ENCODE measurements at regions of chr18 and their contacts with region 1.

Region 1: DNA sequence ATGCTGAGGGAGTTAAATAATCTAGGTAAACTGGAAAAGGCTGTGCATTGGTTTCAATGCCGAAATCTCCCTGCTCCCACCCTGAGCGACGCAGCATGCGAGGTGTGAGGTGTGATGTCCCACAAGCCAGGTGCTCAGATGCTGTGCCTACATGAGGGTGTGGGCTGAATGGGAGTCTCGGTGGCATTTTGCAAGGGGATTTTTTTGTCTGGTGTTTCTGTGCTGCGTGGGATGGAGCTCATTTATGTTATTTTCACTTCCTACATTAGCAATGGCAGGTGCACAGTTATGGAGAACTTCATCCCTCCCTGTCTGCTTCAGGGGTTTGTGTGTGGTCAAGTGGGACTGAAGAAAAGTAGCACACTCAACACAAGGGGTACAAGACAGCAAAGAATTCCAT is 110.2 kb upstream of the CCDC68 start:
- DNase-seq: peak; percentile 66
- ATAC-seq: peak; percentile 86
- H3K4me3 ChIP-seq: no peak overlapping the region
- H3K27ac ChIP-seq: peak overlapping the region; percentile 39; the same call in 1 of the 2 replicates
- H3K4me1 ChIP-seq: peaks cover 37% of the 10 kb centered on the region
- H3K27me3 ChIP-seq: no peaks in the 10 kb centered on the region
- CTCF ChIP-seq: no peak
- EP300 ChIP-seq: peak; percentile 93 to 95; a peak in 3 of 4 replicates
- POLR2A ChIP-seq: no peak
- RAD21 ChIP-seq: no peak

Region 2: GRCh38 chr18:55079481-55080355 is 10.2 kb after region 1 on chr18:
- CTCF ChIA-PET with region 1: interaction called, 5 read pairs
- POLR2A ChIA-PET with region 1: interaction called, 5 read pairs
- RAD21 ChIA-PET with region 1: interaction called, 3 read pairs
- SMC1A ChIA-PET with region 1: interaction called, 49 read pairs
- in situ Hi-C with region 1: no loop called
- intact Hi-C with region 1: no loop called
- DNase-seq: no peak
- ATAC-seq: no peak
- H3K4me3 ChIP-seq: no peak overlapping the region
- H3K27ac ChIP-seq: no peak overlapping the region
- H3K4me1 ChIP-seq: no peaks in the 10 kb centered on the region
- H3K27me3 ChIP-seq: no peaks in the 10 kb centered on the region
- CTCF ChIP-seq: no peak
- EP300 ChIP-seq: no peak
- POLR2A ChIP-seq: no peak
- RAD21 ChIP-seq: no peak

Region 3: DNA sequence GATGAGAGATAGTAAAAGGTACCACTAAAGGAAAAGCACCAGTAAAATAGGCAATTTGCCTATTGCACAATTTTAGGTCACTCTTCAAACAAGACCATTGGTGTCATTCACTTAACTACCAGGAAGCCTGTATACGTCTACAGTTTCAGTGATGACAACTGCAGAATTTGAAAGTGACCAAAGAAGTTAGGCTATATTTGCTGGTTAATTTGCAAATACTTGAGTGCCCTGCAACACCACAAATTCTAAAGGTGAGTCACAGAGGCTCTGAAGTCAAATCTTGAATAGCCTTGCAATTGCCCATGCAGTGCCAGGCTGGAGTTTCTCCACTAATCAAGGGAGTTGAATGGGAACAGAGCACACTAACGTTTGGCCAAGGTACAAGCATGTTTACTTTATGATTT is 18.5 kb after region 1 on chr18:
- CTCF ChIA-PET with region 1: interaction called, 3 read pairs
- POLR2A ChIA-PET with region 1: interaction called, 6 read pairs
- RAD21 ChIA-PET with region 1: interaction called, 5 read pairs
- SMC1A ChIA-PET with region 1: interaction called, 49 read pairs
- in situ Hi-C with region 1: no loop called
- intact Hi-C with region 1: no loop called
- DNase-seq: no peak
- ATAC-seq: peak; percentile 83
- H3K4me3 ChIP-seq: no peak overlapping the region
- H3K27ac ChIP-seq: no peak overlapping the region
- H3K4me1 ChIP-seq: no peaks in the 10 kb centered on the region
- H3K27me3 ChIP-seq: no peaks in the 10 kb centered on the region
- CTCF ChIP-seq: no peak
- EP300 ChIP-seq: no peak
- POLR2A ChIP-seq: no peak
- RAD21 ChIP-seq: no peak

Region 4: DNA sequence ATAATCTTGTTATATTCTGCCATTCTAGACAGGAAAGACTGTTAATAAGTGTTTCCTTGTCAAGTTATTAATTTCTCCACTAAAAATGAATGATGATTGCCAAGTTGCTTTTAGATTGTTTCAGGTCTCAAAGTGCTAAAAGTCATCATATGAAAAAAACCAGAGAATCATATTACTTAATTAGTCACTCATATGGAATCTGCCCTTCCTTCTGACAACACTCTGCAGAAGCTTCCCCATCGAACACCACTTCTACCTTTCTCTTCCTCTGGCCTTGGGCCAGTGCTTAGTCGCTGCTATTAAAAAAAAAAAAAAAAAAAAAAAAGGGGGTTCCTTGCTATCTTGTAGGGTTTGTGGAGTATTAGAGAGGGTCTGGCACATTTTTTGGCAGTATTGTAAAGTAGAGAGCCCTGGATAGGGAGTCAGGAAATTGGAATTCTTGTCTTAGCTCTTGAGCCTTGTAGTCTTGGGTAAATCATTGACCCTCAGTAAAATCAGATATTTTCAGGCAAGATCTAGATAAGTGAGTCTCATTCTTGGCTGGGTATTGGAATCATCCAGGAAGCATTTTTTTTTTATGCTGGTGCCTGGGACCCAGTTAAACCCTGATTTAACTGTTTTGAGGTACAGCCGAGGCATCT is 31.4 kb after region 1 on chr18:
- CTCF ChIA-PET with region 1: no interaction called
- POLR2A ChIA-PET with region 1: no interaction called
- RAD21 ChIA-PET with region 1: no interaction called
- SMC1A ChIA-PET with region 1: no interaction called
- in situ Hi-C with region 1: no loop called
- intact Hi-C with region 1: no loop called
- DNase-seq: no peak
- ATAC-seq: no peak
- H3K4me3 ChIP-seq: no peak overlapping the region
- H3K27ac ChIP-seq: no peak overlapping the region
- H3K4me1 ChIP-seq: no peaks in the 10 kb centered on the region
- H3K27me3 ChIP-seq: no peaks in the 10 kb centered on the region
- CTCF ChIP-seq: no peak
- EP300 ChIP-seq: no peak
- POLR2A ChIP-seq: no peak
- RAD21 ChIP-seq: no peak

Measured in GM12878 (cell line).